Gastrocnemius medialis (tissue), 4 donors: ENCODE measurements at regions of chr16 and their contacts with region 1.

Region 1: GRCh38 chr16:55264949-55265348 is 59.1 kb upstream of the IRX6 start:
- DNase-seq: peak in 1 of 2 donors; percentile 39
- ATAC-seq: peak; percentile 73 to 75
- H3K4me3 ChIP-seq: no peak overlapping the region
- H3K27ac ChIP-seq: peak overlapping the region in 2 of 4 donors; percentile 52 to 58
- H3K4me1 ChIP-seq: peaks cover 11 to 15% of the 10 kb centered on the region in 2 donors
- H3K27me3 ChIP-seq: no peaks in the 10 kb centered on the region
- CTCF ChIP-seq: no peak
- POLR2A ChIP-seq: peak in 1 of 2 donors; percentile 52

Region 2: GRCh38 chr16:53968454-53968853 is 1296.5 kb before region 1 on chr16:
- in situ Hi-C with region 1: no loop called
- intact Hi-C with region 1: loop called (anchors 10 kb)
- DNase-seq: peak in 1 of 2 donors; percentile 29
- ATAC-seq: peak; percentile 47 to 92
- H3K4me3 ChIP-seq: no peak overlapping the region
- H3K27ac ChIP-seq: peak overlapping the region; percentile 16 to 81 (median 35)
- H3K4me1 ChIP-seq: peaks cover 46 to 53% of the 10 kb centered on the region in 2 donors
- H3K27me3 ChIP-seq: no peaks in the 10 kb centered on the region
- CTCF ChIP-seq: no peak
- POLR2A ChIP-seq: no peak